CD4-positive, alpha-beta memory T cell (primary cell): ENCODE measurements at regions of chr3 and their contacts with region 1.

Region 1: DNA sequence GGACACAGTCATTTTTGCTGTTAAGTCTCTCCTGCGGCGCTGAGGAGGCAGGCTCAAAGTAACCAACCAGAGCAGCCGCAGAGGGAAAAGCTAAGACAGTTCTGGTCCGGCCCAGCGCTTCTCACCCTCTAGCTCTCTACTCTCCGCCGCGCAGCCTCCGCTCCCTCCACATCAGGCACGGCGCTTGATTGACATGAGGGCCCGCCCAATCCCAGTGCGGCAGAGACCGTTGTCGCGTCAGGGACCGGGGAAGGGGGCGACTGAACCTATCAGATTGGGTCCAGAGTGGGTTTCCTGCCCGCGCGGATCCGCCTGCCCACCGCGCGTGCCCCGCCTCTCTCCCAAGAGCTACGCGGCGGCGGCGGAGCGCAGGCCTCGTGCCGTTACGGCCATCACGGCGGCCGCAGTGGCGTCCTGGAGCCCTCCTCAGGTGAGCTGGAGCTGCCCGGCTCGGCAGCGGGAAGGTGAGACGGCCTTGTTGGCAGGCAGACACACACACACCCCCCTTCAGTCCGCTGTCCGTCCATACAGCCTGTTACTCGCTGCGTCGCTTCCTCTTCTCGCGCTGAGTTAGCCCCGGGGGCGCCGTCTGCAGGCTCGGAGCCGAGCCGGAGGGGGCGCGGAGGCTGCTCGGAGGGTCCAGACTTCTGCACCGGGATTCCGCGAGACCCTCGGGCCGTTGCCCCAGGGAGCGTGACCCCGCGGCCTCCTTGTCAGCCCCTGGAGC is at the start of gene NCK1:
- DNase-seq: peak; percentile 97 to 100 (median 98)
- H3K4me3 ChIP-seq: peak within 1 kb of the TSS; percentile 74 to 89
- H3K4me3 Mint-ChIP-seq: peak within 1 kb of the TSS; percentile 80 to 99 (median 96)
- H3K27ac ChIP-seq: peak within 1 kb of the TSS; percentile 91
- H3K27ac Mint-ChIP-seq: peak within 1 kb of the TSS; percentile 98 to 99 (median 98)
- H3K4me1 ChIP-seq: peaks cover 47% of the 10 kb centered on the region
- H3K4me1 Mint-ChIP-seq: peaks cover 38 to 74% (median 54%) of the 10 kb centered on the region in 4 donors
- H3K27me3 ChIP-seq: no peaks in the 10 kb centered on the region
- H3K27me3 Mint-ChIP-seq: no peaks in the 10 kb centered on the region
- total RNA-seq, gene NCK1: 61.2 to 68.4 TPM

Region 2: DNA sequence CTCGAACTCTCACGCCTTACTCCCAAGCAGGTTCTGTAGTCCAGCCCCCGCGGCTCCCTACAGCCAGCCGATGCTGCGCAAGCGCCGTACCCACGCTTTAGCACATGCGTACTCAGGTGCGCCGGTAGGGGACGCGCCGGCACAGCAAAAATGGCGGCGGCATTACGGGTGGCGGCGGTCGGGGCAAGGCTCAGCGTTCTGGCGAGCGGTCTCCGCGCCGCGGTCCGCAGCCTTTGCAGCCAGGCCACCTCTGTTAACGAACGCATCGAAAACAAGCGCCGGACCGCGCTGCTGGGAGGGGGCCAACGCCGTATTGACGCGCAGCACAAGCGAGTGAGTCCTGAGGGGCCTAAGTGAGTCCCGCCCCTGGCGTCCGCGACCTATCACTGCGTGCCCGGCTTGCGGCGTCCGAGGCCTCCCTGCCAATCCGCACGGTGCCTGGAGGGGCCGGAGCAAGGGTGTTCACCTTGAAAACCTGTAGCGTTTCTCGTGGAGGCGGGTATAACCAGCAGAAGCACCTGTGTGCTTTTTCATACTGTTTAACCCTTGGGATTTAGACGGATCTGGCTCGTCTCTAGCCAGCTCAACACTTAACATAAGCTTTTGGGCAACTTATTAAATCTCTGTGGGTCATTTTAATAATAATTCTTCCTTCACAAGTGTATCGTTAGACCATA is 611.7 kb before region 1 on chr3 and contains the start of gene PCCB:
- CTCF ChIA-PET with region 1: interaction called, 3 read pairs
- POLR2A ChIA-PET with region 1: no interaction called
- intact Hi-C with region 1: loop called (anchors 1 kb)
- DNase-seq: peak; percentile 93 to 96 (median 94)
- H3K4me3 ChIP-seq: peak within 1 kb of the TSS; percentile 43 to 77
- H3K4me3 Mint-ChIP-seq: peak within 1 kb of the TSS; percentile 85 to 93 (median 90)
- H3K27ac ChIP-seq: peak within 1 kb of the TSS; percentile 75
- H3K27ac Mint-ChIP-seq: peak within 1 kb of the TSS; percentile 75 to 94 (median 90)
- H3K4me1 ChIP-seq: peaks cover 17% of the 10 kb centered on the region
- H3K4me1 Mint-ChIP-seq: peaks cover 15 to 27% (median 20%) of the 10 kb centered on the region in 4 donors
- H3K27me3 ChIP-seq: no peaks in the 10 kb centered on the region
- H3K27me3 Mint-ChIP-seq: no peaks in the 10 kb centered on the region
- total RNA-seq, gene PCCB: 12.1 to 12.4 TPM

Region 3: DNA sequence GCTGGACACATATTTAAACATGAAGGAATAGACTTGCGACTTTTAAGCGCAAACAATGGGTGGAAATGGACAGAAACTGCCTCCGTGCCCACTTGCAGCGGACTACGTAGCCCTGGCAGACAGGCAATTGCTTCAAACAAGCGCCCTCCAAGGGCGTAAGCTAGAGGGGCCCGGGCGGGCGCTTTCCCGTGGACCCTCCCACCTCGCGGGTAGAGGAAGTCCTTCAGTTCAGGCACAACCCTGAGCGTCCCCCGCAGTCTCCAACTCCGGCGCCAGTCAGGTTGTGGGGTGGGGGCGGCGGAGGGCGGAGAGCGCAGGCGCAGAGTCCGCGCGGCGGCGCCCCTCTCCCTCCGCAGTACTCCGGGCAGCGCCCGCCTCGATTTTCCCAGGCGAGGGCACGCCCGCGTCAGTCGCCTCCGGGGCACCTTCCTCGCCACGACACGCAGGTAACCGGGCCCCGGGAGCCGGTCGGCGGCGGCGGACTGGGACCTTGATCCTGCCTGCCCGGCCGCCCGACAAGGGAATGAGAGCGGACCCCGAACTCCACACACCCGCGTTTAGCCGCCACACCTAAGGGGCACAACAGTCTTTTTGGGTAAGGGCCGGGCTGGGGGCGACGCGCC is 43.2 kb before region 1 on chr3 and contains the start of gene SLC35G2:
- CTCF ChIA-PET with region 1: no interaction called
- POLR2A ChIA-PET with region 1: interaction called, 3 read pairs
- intact Hi-C with region 1: loop called (anchors 5 kb)
- DNase-seq: peak; percentile 4 to 44 (median 18)
- H3K4me3 ChIP-seq: peak within 1 kb of the TSS; percentile 50 to 63
- H3K4me3 Mint-ChIP-seq: peak within 1 kb of the TSS; percentile 83 to 94 (median 89)
- H3K27ac ChIP-seq: no peak within 1 kb of the TSS
- H3K27ac Mint-ChIP-seq: peak within 1 kb of the TSS in 4 of 7 donors; percentile 11 to 65 (median 42)
- H3K4me1 ChIP-seq: peaks cover 17% of the 10 kb centered on the region
- H3K4me1 Mint-ChIP-seq: peaks cover 14 to 21% (median 18%) of the 10 kb centered on the region in 4 donors
- H3K27me3 ChIP-seq: peaks cover 13% of the 10 kb centered on the region
- H3K27me3 Mint-ChIP-seq: peaks cover 18 to 39% of the 10 kb centered on the region in 2 donors
- total RNA-seq, gene SLC35G2: 0.17 to 0.42 TPM

Region 4: GRCh38 chr3:136909187-136909586 is 47.1 kb after region 1 on chr3:
- CTCF ChIA-PET with region 1: interaction called, 5 read pairs
- POLR2A ChIA-PET with region 1: interaction called, 39 read pairs
- intact Hi-C with region 1: no loop called
- DNase-seq: no peak
- H3K4me3 ChIP-seq: no peak overlapping the region
- H3K4me3 Mint-ChIP-seq: peak overlapping the region; percentile 1 to 67 (median 36)
- H3K27ac ChIP-seq: peak overlapping the region; percentile 2
- H3K27ac Mint-ChIP-seq: peak overlapping the region; percentile 62 to 90 (median 71)
- H3K4me1 ChIP-seq: peaks cover 84% of the 10 kb centered on the region
- H3K4me1 Mint-ChIP-seq: peaks cover 65 to 86% (median 75%) of the 10 kb centered on the region in 4 donors
- H3K27me3 ChIP-seq: no peaks in the 10 kb centered on the region
- H3K27me3 Mint-ChIP-seq: no peaks in the 10 kb centered on the region

Region 5: GRCh38 chr3:136938334-136938733 is 76.3 kb after region 1 on chr3:
- CTCF ChIA-PET with region 1: interaction called, 4 read pairs
- POLR2A ChIA-PET with region 1: interaction called, 7 read pairs
- intact Hi-C with region 1: loop called (anchors 5 kb)
- DNase-seq: no peak
- H3K4me3 ChIP-seq: no peak overlapping the region
- H3K4me3 Mint-ChIP-seq: peak overlapping the region in 4 of 8 donors; percentile 6 to 45 (median 25)
- H3K27ac ChIP-seq: no peak overlapping the region
- H3K27ac Mint-ChIP-seq: peak overlapping the region in 2 of 7 donors; percentile 10 to 42
- H3K4me1 ChIP-seq: peaks cover 49% of the 10 kb centered on the region
- H3K4me1 Mint-ChIP-seq: peaks cover 49 to 86% (median 69%) of the 10 kb centered on the region in 4 donors
- H3K27me3 ChIP-seq: no peaks in the 10 kb centered on the region
- H3K27me3 Mint-ChIP-seq: no peaks in the 10 kb centered on the region

Region 6: DNA sequence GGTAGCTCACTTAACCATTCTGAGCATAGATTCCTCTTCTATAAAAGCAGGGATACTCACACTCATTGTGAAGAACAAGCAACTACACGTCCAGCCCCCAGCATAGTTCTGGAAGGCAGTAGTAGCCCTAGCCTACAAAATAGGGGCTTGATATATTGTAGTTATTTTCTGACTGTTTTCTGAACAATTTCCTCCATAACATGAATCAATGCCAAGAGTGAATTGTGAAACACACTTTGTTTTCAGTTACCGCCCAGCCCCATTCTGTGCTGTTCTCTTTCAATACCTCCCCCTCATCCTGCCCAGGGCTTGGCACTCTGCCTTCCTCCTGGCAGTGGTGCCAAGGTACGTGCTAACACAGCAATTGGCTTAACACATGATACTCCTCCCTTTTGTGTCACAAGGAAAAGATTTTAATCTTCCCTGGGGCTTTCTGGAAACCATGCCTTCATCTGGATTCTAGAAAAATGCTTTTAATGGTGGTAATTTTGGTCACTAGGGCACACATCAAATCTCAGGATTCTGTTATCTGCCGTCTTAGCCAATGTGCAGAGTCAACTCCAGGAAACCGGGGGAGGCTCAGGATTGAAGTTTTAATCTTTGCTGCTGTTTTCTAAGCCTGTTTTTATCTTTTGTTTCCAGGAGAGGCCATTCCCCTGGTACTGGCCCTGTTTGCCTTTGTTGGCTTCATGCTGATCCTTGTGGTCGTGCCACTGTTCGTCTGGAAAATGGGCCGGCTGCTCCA is 132.9 kb after region 1 on chr3:
- CTCF ChIA-PET with region 1: no interaction called
- POLR2A ChIA-PET with region 1: no interaction called
- intact Hi-C with region 1: no loop called
- DNase-seq: no peak
- H3K4me3 ChIP-seq: no peak overlapping the region
- H3K4me3 Mint-ChIP-seq: no peak overlapping the region
- H3K27ac ChIP-seq: no peak overlapping the region
- H3K27ac Mint-ChIP-seq: peak overlapping the region in 2 of 7 donors; percentile 19 to 80
- H3K4me1 ChIP-seq: peaks cover 4% of the 10 kb centered on the region
- H3K4me1 Mint-ChIP-seq: peaks cover 0 to 8% (median 6%) of the 10 kb centered on the region in 4 donors
- H3K27me3 ChIP-seq: no peaks in the 10 kb centered on the region
- H3K27me3 Mint-ChIP-seq: no peaks in the 10 kb centered on the region

Region 7: GRCh38 chr3:137084586-137084985 is 222.5 kb after region 1 on chr3:
- CTCF ChIA-PET with region 1: no interaction called
- POLR2A ChIA-PET with region 1: no interaction called
- intact Hi-C with region 1: no loop called
- DNase-seq: no peak
- H3K4me3 ChIP-seq: no peak overlapping the region
- H3K4me3 Mint-ChIP-seq: no peak overlapping the region
- H3K27ac ChIP-seq: no peak overlapping the region
- H3K27ac Mint-ChIP-seq: no peak overlapping the region
- H3K4me1 ChIP-seq: no peaks in the 10 kb centered on the region
- H3K4me1 Mint-ChIP-seq: no peaks in the 10 kb centered on the region
- H3K27me3 ChIP-seq: no peaks in the 10 kb centered on the region
- H3K27me3 Mint-ChIP-seq: peaks cover 18 to 20% of the 10 kb centered on the region in 2 donors

Region 8: GRCh38 chr3:137324114-137324513 is 462.1 kb after region 1 on chr3:
- CTCF ChIA-PET with region 1: no interaction called
- POLR2A ChIA-PET with region 1: no interaction called
- intact Hi-C with region 1: no loop called
- DNase-seq: no peak
- H3K4me3 ChIP-seq: no peak overlapping the region
- H3K4me3 Mint-ChIP-seq: no peak overlapping the region
- H3K27ac ChIP-seq: no peak overlapping the region
- H3K27ac Mint-ChIP-seq: no peak overlapping the region
- H3K4me1 ChIP-seq: no peaks in the 10 kb centered on the region
- H3K4me1 Mint-ChIP-seq: no peaks in the 10 kb centered on the region
- H3K27me3 ChIP-seq: no peaks in the 10 kb centered on the region
- H3K27me3 Mint-ChIP-seq: no peaks in the 10 kb centered on the region